Calu3 (cell line): ENCODE measurements at regions of chr4 and their contacts with region 1.

Region 1: GRCh38 chr4:24657768-24658617 is 73.6 kb upstream of the DHX15 start:
- DNase-seq: peak; percentile 75
- H3K4me3 Mint-ChIP-seq: peak overlapping the region; percentile 29
- H3K27ac Mint-ChIP-seq: peak overlapping the region; percentile 79
- H3K4me1 Mint-ChIP-seq: peaks cover 30% of the 10 kb centered on the region
- H3K27me3 Mint-ChIP-seq: no peaks in the 10 kb centered on the region
- CTCF ChIP-seq: no peak

Region 2: DNA sequence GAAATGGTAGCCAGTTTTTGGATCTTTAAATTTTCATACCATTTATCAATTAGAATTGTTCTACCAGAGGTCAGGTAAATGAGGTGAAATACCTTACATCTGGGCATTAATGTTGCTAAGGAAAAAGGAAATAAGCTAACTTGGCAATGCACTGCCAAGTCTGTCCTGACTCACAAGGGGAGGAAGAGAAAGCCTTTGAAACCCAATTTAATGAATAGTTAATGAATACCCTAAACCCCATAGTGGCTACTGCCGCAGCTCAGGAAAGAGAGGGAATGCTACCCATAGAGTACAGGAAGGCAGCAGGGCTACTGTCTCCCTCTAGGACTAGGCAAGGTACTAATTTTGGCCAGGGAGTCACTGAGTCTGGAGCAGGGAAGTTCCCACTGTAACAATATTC is 56.9 kb before region 1 on chr4:
- CTCF ChIA-PET with region 1: interaction called, 5 read pairs
- intact Hi-C with region 1: loop called (anchors 2 kb)
- DNase-seq: peak; percentile 13
- H3K4me3 Mint-ChIP-seq: peak overlapping the region; percentile 41
- H3K27ac Mint-ChIP-seq: peak overlapping the region; percentile 67
- H3K4me1 Mint-ChIP-seq: peaks cover 58% of the 10 kb centered on the region
- H3K27me3 Mint-ChIP-seq: no peaks in the 10 kb centered on the region
- CTCF ChIP-seq: no peak

Region 3: DNA sequence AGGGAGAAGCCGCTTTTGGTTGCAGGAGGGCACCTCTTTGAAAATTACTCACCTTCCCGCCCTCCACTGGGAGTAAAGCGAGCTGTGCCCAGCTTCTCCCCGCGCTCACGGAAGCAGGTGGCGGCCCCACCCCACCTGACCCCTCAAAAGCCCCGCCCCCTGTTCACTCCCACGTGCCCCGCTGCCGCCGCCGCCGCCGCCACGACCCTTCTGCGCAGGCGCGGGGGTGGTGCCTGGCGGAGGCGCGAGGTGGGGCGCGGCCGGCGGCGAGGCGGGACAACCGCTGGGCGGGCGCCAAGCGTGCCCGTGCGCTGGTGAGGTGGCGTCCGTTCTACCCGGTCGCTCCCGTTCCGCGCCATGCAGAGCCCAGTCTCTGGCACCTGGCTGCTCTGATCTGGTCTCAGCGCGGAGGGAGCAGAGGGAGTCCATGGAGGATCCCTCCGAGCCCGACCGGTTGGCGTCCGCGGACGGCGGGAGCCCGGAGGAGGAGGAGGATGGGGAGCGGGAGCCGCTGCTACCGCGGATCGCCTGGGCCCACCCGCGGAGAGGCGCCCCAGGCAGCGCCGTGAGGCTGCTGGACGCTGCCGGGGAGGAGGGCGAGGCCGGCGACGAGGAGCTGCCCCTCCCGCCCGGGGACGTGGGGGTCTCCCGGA is 575.9 kb after region 1 on chr4 and contains the start of gene PI4K2B:
- CTCF ChIA-PET with region 1: no interaction called
- intact Hi-C with region 1: no loop called
- DNase-seq: peak; percentile 92
- H3K4me3 Mint-ChIP-seq: peak within 1 kb of the TSS; percentile 82
- H3K27ac Mint-ChIP-seq: peak within 1 kb of the TSS; percentile 85
- H3K4me1 Mint-ChIP-seq: peaks cover 7% of the 10 kb centered on the region
- H3K27me3 Mint-ChIP-seq: no peaks in the 10 kb centered on the region
- CTCF ChIP-seq: no peak
- total RNA-seq, gene PI4K2B: 13.0 and 13.2 TPM in 2 replicates

Region 4: DNA sequence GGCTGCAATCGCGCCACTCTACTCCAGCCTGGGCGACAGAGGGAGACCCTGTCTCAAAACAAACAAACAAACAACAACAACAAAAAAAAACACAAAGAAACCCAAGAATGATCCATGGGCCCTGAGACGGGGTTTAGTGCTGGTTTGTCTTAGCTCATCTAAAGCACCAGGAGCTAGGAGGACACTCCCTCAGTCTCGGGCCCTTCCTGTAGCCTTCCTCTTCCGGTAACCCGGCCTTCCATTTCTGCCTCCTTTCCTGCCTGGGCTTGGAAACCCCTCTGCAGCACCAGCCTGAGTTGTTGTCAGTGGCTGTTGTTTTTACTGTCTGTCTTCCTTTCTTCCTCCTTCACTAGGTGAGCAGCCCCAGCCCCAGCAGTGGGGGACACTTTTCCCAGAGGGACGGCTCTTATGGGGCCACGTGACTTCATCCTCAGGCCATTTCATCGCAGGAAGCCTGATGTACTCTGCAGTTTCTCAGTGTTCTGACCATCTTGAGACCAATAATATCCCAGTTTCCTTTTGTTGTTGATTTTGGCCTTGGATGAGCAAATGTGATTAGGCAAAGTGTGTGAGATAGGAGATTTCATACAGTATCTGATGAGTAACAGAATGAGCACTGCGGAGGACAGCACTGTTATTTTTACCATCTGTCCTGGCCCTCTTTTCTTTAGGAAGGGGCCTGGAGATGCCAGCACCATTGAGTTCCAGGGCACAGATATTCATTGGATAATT is 809.1 kb after region 1 on chr4:
- CTCF ChIA-PET with region 1: no interaction called
- intact Hi-C with region 1: no loop called
- DNase-seq: no peak
- H3K4me3 Mint-ChIP-seq: no peak overlapping the region
- H3K27ac Mint-ChIP-seq: no peak overlapping the region
- H3K4me1 Mint-ChIP-seq: no peaks in the 10 kb centered on the region
- H3K27me3 Mint-ChIP-seq: no peaks in the 10 kb centered on the region
- CTCF ChIP-seq: no peak